ENCODE measurements at regions of chr5 and their contacts with region 1.

Region 1: GRCh38 chr5:119355685-119356611 is at the start of gene TNFAIP8:
- DNase-seq: peak; percentile 57
- H3K4me3 Mint-ChIP-seq: peak within 1 kb of the TSS; percentile 81
- H3K27ac Mint-ChIP-seq: peak within 1 kb of the TSS; percentile 88
- H3K4me1 Mint-ChIP-seq: peaks cover 93% of the 10 kb centered on the region
- H3K27me3 Mint-ChIP-seq: no peaks in the 10 kb centered on the region

Region 2: DNA sequence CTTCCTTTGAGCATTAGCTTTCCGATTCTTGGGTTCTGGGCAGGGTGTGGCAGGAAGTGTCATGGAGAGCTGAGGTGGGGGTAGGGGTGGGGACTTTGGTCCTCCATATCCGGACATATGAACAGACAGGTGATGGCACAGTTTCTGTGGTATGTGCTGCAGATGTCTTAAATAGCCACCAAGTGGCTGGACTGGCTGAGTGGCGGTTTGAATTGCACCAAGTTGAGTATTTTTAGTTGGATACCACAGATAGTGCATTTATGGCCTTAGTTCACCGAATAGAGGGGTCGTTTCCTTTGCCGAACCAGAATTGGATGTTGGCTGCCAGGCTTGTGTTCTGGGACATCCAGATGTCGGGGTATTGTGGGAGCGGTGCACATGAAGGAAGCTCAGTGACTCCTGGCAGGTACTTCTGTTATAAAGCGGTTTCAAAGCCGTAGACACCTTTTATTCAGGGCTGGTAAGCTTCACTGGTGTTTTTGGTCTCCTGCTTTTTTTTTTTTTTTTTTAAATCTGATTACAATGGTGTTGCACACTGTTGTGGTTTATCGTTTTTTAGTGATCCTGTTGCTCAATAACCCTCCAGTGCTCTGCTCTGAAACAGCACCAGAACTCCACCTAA is 15.2 kb before region 1 on chr5:
- CTCF ChIA-PET with region 1: interaction called, 11 read pairs
- DNase-seq: peak; percentile 84
- H3K4me3 Mint-ChIP-seq: peak overlapping the region; percentile 82
- H3K27ac Mint-ChIP-seq: peak overlapping the region; percentile 92
- H3K4me1 Mint-ChIP-seq: peaks cover 95% of the 10 kb centered on the region
- H3K27me3 Mint-ChIP-seq: no peaks in the 10 kb centered on the region

Region 3: GRCh38 chr5:119367502-119368237 is 11.7 kb after region 1 on chr5:
- CTCF ChIA-PET with region 1: interaction called, 11 read pairs
- DNase-seq: no peak
- H3K4me3 Mint-ChIP-seq: peak overlapping the region; percentile 43
- H3K27ac Mint-ChIP-seq: peak overlapping the region; percentile 91
- H3K4me1 Mint-ChIP-seq: peaks cover 81% of the 10 kb centered on the region
- H3K27me3 Mint-ChIP-seq: no peaks in the 10 kb centered on the region

Measured in activated naive CD4-positive, alpha-beta T cell treated with anti-CD3 and anti-CD28 coated beads, Interleukin-2, amount 10 ng/mL, durations not matched to agents 7 days and 5 days (primary cell).